IMR-90 (cell line): ENCODE measurements at regions of chr5 and their contacts with region 1.

Region 1: DNA sequence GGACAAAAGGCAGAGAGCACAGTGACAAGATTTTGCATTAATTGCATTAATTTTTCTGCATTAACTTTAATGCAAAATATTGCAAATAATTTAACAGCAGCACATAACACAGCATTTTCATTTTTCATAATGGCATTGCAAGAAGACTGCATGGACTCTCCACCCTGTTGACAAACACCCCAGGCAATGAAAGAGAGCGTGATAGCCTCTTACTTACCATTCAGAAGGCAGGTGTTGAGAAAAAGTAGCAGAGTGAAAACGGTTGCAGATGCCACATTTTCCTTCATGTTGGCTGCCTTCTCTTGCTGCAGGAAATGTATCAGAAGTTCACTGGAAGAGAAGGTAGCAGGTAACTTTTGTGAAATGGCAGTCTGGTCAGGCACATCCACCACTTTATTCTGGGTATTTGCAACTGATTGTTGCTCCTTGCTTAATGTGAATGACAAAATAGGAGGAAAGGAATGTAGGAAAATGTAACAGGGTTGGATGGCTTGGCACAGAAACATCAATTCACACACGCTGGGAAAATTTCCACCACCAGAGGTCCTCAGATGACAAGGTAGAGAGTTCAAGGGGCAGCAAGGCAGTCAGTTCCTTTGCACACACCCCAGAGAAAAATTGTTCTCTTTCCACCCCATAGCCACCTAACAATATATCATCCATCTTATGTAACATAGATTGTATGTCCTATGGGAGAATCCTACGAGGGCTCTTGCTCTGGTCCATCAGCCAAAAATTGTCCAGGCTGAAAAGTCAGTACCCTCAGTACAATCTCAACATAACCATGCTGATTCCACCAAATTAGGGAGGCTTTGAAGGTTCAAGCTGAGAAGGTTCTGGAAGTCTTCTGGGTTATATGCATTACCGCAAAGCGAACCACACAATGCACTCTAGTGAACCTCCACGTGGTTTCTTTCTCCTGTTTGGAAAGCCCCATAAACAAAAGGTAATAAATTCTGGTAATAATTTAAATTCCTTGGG is 41.9 kb upstream of the AGXT2 start:
- DNase-seq: peak; percentile 72
- ATAC-seq: peak; percentile 86
- H3K4me3 ChIP-seq: no peak overlapping the region
- H3K27ac ChIP-seq: no peak overlapping the region
- H3K4me1 ChIP-seq: peaks cover 4% of the 10 kb centered on the region; the same call in 1 of the 2 replicates
- H3K27me3 ChIP-seq: peaks cover 6% of the 10 kb centered on the region
- CTCF ChIP-seq: peak; percentile 90
- POLR2A ChIP-seq: no peak
- RAD21 ChIP-seq: peak; percentile 97

Region 2: DNA sequence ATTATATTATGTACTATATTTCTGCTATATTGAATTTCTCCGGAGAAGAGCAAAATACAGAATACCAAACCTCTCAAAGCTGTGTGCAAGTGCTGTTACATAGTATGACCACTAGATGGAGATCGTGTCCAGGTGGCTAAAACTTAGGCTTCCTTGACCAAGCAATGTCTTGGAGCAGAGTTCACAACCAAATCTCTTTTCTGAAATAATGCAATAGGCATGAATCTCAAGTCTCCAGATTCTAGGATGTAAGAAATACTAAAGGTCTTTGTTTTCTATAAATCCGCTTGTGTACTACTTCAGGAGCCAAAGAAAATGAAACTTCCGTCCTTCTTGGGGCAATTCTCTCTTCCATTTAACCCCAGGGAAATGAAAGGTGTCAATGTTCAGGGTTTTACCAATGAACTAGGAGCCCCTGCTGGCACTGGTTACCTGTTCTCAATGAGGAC is 615.0 kb before region 1 on chr5:
- CTCF ChIA-PET with region 1: no interaction called
- POLR2A ChIA-PET with region 1: no interaction called
- dilution Hi-C with region 1: no loop called
- in situ Hi-C with region 1: no loop called
- intact Hi-C with region 1: loop called (anchors 5 kb)
- DNase-seq: peak; percentile 77
- ATAC-seq: peak; percentile 99
- H3K4me3 ChIP-seq: no peak overlapping the region
- H3K27ac ChIP-seq: no peak overlapping the region
- H3K4me1 ChIP-seq: no peaks in the 10 kb centered on the region
- H3K27me3 ChIP-seq: peaks cover 16% of the 10 kb centered on the region
- CTCF ChIP-seq: peak; percentile 94
- POLR2A ChIP-seq: peak; percentile 45; the same call in 1 of the 2 replicates
- RAD21 ChIP-seq: peak; percentile 96

Region 3: DNA sequence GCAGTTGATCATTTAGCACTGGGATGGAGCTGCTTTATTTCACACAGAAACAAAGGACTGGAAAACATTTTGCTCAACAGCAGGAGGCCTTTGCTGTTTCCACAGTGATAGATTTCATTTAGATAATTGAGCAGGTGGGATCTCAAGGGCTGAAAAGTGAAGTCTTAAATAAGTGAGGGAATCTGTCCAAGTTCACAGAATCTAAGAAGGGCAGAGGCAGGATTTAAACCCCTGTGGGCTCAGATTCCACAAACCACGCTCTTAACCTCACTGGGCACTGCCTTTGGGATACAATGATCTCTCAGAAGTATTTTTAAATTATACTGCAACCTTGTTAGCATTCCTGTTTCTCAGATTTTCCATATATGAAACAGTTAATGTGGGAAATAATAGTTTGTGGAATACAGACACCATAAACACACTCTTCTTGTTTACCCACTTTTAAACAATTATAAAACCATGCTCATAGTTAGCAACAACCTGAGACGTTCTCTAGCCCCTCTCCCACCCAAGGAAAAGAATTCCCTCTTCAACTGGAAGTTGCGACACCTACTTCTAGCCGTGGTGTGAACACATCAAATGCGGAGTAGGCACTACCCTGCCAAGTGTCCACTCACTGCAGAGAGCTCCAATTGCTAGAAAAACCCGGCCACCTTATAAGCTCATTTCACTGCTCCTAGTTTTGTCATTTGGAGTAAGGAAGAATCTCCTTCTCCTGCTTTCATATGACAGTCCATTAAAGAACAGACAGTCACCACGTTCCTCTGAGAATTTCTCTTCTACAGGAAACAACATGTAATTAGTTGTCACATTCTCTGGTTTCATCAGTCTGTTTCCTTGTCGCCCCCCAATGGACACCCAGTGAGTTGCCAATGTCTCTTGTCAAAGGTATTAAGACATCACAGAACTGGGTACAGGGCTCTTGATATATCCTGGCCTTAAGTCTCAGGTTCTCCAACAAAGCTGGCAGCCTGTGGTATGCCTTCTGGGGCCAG is 93.2 kb after region 1 on chr5:
- CTCF ChIA-PET with region 1: interaction called, 7 read pairs
- POLR2A ChIA-PET with region 1: no interaction called
- dilution Hi-C with region 1: no loop called
- in situ Hi-C with region 1: loop called (anchors 5 kb)
- intact Hi-C with region 1: loop called (anchors 1 kb)
- DNase-seq: peak; percentile 60
- ATAC-seq: peak; percentile 81
- H3K4me3 ChIP-seq: no peak overlapping the region
- H3K27ac ChIP-seq: no peak overlapping the region
- H3K4me1 ChIP-seq: no peaks in the 10 kb centered on the region
- H3K27me3 ChIP-seq: peaks cover 20% of the 10 kb centered on the region
- CTCF ChIP-seq: peak; percentile 75
- POLR2A ChIP-seq: no peak
- RAD21 ChIP-seq: peak; percentile 80

Region 4: GRCh38 chr5:35436410-35437057 is 346.9 kb after region 1 on chr5:
- CTCF ChIA-PET with region 1: no interaction called
- POLR2A ChIA-PET with region 1: no interaction called
- dilution Hi-C with region 1: no loop called
- in situ Hi-C with region 1: no loop called
- intact Hi-C with region 1: loop called (anchors 10 kb)
- DNase-seq: peak; percentile 22
- ATAC-seq: no peak
- H3K4me3 ChIP-seq: no peak overlapping the region
- H3K27ac ChIP-seq: no peak overlapping the region
- H3K4me1 ChIP-seq: no peaks in the 10 kb centered on the region
- H3K27me3 ChIP-seq: no peaks in the 10 kb centered on the region
- CTCF ChIP-seq: peak; percentile 49
- POLR2A ChIP-seq: no peak
- RAD21 ChIP-seq: no peak

Region 5: GRCh38 chr5:35651002-35651756 is 561.6 kb after region 1 on chr5:
- CTCF ChIA-PET with region 1: no interaction called
- POLR2A ChIA-PET with region 1: no interaction called
- dilution Hi-C with region 1: no loop called
- in situ Hi-C with region 1: no loop called
- intact Hi-C with region 1: loop called (anchors 5 kb)
- DNase-seq: peak; percentile 57
- ATAC-seq: peak; percentile 92
- H3K4me3 ChIP-seq: no peak overlapping the region
- H3K27ac ChIP-seq: no peak overlapping the region
- H3K4me1 ChIP-seq: peaks cover 2% of the 10 kb centered on the region; the same call in 1 of the 2 replicates
- H3K27me3 ChIP-seq: no peaks in the 10 kb centered on the region
- CTCF ChIP-seq: peak; percentile 63
- POLR2A ChIP-seq: no peak
- RAD21 ChIP-seq: peak; percentile 73